ENCODE measurements at regions of chr12 and their contacts with region 1.

Region 1: DNA sequence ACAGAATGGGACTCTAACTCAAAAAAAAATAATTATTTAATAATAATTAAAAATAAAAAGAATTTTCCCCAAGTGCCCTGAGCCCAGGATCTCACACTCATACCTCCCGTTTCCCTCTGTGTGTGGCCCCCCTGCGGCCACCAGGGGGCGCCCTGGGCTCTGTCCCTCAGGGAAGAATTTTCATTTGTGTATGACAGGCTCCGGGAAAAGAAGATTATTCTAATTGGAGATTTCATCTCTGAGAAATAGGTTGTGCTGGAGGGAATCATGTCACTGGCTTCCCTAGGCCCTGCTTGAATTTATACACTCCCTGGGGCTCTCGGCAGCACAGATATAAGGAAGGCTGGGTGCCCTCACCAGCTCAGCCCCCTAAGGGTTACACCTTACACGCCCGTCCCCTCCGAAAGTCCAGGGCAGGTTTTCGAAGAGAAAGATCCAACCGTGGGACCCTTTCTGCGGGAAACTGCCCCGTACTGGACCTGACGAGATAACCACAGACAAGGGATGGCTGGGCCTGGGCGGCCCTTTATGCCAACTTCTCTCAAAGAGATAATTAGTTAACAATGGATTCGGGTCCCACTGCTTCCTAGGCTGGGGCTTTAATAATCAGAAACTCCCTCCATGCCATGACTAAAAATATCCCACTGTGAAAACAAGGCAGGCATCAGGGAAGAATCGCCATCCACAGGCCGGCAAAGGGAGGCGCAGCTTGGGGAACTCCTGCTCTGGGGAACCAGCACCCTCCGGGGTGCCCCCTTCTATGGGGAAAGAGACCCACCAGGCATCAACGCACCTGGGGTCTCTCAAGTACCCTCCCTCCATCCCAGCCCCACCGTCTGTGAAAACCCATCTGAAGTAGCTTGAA is 80.7 kb downstream of the KDM2B start:
- DNase-seq: peak; percentile 80
- CTCF ChIP-seq: peak; percentile 91

Region 2: DNA sequence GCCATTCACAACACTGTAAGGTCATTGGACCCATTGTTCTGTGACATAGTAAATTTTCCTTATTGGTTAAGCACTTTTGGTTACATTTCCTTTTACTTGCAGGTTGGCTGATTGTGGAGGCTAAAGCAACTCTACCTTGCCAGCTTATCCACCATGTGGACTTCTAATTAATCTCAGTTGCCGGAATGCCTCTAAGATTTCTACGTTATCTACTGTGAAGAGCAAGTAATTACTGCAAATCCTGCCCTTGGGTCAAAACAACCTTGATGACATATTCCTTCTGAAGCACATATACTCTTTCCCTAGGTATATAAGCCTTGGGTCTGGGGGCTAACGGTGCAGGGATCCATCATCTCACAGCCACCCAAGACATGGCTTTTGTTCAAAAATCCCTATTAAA is 188.8 kb after region 1 on chr12:
- in situ Hi-C with region 1: loop called (anchors 10 kb)
- DNase-seq: no peak
- CTCF ChIP-seq: no peak